CD4-positive, alpha-beta memory T cell (primary cell): ENCODE measurements at regions of chr18 and their contacts with region 1.

Region 1: GRCh38 chr18:24118750-24119577 is 19.9 kb upstream of the CABYR start:
- DNase-seq: peak; percentile 72 to 78 (median 76)
- H3K4me3 ChIP-seq: no peak overlapping the region
- H3K4me3 Mint-ChIP-seq: no peak overlapping the region
- H3K27ac ChIP-seq: no peak overlapping the region
- H3K27ac Mint-ChIP-seq: peak overlapping the region; percentile 37 to 79 (median 50)
- H3K4me1 ChIP-seq: peaks cover 16% of the 10 kb centered on the region
- H3K4me1 Mint-ChIP-seq: peaks cover 16 to 31% (median 23%) of the 10 kb centered on the region in 4 donors
- H3K27me3 ChIP-seq: no peaks in the 10 kb centered on the region
- H3K27me3 Mint-ChIP-seq: no peaks in the 10 kb centered on the region

Region 2: GRCh38 chr18:23619388-23619881 is 499.5 kb before region 1 on chr18:
- CTCF ChIA-PET with region 1: interaction called, 5 read pairs
- POLR2A ChIA-PET with region 1: no interaction called
- intact Hi-C with region 1: loop called (anchors 1 kb)
- DNase-seq: peak in 3 of 5 donors; percentile 5 to 6 (median 5)
- H3K4me3 ChIP-seq: peak overlapping the region in 1 of 2 donors; percentile 3
- H3K4me3 Mint-ChIP-seq: peak overlapping the region; percentile 46 to 81 (median 70)
- H3K27ac ChIP-seq: no peak overlapping the region
- H3K27ac Mint-ChIP-seq: peak overlapping the region in 1 of 7 donors; percentile 1
- H3K4me1 ChIP-seq: peaks cover 11% of the 10 kb centered on the region
- H3K4me1 Mint-ChIP-seq: peaks cover 0 to 7% (median 3%) of the 10 kb centered on the region in 4 donors
- H3K27me3 ChIP-seq: peaks cover 31% of the 10 kb centered on the region
- H3K27me3 Mint-ChIP-seq: peaks cover 34 to 36% of the 10 kb centered on the region in 2 donors

Region 3: DNA sequence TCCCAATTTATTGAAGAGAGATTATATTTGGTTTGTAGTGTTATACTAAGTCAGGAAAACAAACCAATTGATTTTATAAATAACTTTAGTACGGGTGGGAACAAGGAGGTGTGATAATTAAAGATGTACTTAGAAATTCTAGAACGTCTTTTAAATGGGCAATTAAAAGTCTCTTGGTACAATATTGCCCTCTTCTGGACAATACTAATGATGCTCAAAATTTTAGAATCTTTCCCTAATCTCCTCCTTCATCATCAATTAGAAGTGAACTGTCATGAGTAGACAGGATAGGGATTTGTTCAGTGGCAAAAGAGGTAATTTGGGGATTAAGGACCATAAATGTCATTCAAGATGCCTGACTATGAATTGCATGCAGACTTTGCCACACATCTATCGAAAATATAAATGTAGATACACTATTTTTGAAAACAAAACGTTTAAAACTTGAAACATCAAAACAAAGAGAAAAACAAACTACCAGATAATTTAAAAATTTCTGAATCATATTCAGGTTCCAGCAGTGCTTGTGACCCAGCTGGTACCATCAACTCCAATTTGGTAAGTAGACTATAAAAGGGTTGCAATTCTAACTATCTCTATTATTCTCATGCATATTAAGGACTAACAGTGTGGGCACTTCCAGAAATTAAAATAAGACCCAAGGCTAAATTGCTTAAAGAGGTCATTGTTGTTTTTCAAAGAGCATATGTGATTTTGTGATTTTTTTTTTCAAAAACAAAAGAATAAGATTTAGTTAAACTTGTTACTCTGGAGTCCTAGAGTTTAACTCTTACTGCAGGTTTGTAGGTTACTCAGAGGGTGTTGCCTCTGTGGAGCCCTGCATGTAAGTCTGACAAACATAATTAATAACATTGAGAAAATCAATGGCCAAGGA is 306.2 kb before region 1 on chr18:
- CTCF ChIA-PET with region 1: interaction called, 3 read pairs
- POLR2A ChIA-PET with region 1: no interaction called
- intact Hi-C with region 1: loop called (anchors 1 kb)
- DNase-seq: peak in 4 of 5 donors; percentile 28 to 39 (median 32)
- H3K4me3 ChIP-seq: no peak overlapping the region
- H3K4me3 Mint-ChIP-seq: no peak overlapping the region
- H3K27ac ChIP-seq: no peak overlapping the region
- H3K27ac Mint-ChIP-seq: no peak overlapping the region
- H3K4me1 ChIP-seq: peaks cover 13% of the 10 kb centered on the region
- H3K4me1 Mint-ChIP-seq: peaks cover 2 to 16% (median 12%) of the 10 kb centered on the region in 4 donors
- H3K27me3 ChIP-seq: no peaks in the 10 kb centered on the region
- H3K27me3 Mint-ChIP-seq: no peaks in the 10 kb centered on the region

Region 4: DNA sequence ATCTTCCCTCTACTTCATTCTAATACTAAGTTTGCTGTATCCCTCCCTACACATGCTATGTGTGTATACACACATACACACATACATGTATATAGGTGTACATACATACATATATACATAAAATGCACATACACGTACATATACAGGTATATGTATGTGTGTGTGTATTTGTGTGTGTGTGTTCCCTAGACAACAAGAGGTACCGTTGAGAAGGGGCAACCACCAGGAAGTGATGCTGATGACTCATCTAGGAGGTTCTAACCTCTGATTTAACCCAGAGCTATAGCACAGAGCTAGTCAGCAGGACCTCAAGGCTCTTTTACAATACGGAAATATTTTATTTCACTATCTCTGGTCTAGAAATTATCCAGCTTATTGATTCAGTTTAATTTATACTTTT is 290.5 kb before region 1 on chr18:
- CTCF ChIA-PET with region 1: no interaction called
- POLR2A ChIA-PET with region 1: no interaction called
- intact Hi-C with region 1: loop called (anchors 2 kb)
- DNase-seq: peak; percentile 68 to 87 (median 83)
- H3K4me3 ChIP-seq: no peak overlapping the region
- H3K4me3 Mint-ChIP-seq: peak overlapping the region in 1 of 8 donors; percentile 57
- H3K27ac ChIP-seq: peak overlapping the region; percentile 48
- H3K27ac Mint-ChIP-seq: peak overlapping the region in 6 of 7 donors; percentile 80 to 96 (median 92)
- H3K4me1 ChIP-seq: peaks cover 15% of the 10 kb centered on the region
- H3K4me1 Mint-ChIP-seq: peaks cover 15 to 36% (median 19%) of the 10 kb centered on the region in 4 donors
- H3K27me3 ChIP-seq: no peaks in the 10 kb centered on the region
- H3K27me3 Mint-ChIP-seq: no peaks in the 10 kb centered on the region

Region 5: DNA sequence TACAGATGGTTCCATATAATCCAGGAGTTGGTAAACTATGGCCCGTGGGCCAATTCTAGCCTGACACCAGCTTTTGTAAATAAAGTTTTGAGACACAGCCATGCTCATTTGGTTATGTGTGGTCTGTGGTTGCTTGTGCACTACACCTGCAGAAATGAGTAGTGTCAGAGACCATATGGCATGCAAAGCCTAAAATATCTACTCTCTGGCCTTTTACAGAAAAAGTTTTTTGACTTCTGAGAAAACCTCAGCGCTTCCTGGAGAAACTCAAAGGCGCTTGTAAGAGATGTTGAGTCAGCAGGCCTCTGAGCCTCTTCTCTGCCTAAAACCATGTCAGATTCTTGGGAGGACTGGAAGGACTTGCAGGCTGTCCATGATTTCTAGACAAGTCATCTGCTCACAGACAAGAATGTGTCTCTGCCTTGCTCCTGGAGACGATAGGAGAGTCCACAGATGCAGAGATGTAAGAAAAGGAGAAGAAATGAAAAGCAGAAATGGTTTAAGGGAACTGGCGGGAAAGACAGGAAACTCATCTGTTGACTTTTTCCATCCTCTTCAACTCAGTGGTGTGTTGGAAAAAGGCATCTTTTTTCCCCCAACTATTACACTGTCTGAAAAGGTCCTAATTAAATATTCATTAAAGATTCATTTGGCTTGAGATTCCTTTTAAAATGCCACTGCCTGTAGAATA is 99.2 kb before region 1 on chr18:
- CTCF ChIA-PET with region 1: interaction called, 3 read pairs
- POLR2A ChIA-PET with region 1: no interaction called
- intact Hi-C with region 1: loop called (anchors 1 kb)
- DNase-seq: peak; percentile 73 to 82 (median 79)
- H3K4me3 ChIP-seq: peak overlapping the region in 1 of 2 donors; percentile 50
- H3K4me3 Mint-ChIP-seq: peak overlapping the region; percentile 78 to 100 (median 96)
- H3K27ac ChIP-seq: peak overlapping the region; percentile 75
- H3K27ac Mint-ChIP-seq: peak overlapping the region; percentile 85 to 99 (median 95)
- H3K4me1 ChIP-seq: peaks cover 83% of the 10 kb centered on the region
- H3K4me1 Mint-ChIP-seq: peaks cover 68 to 96% (median 79%) of the 10 kb centered on the region in 4 donors
- H3K27me3 ChIP-seq: no peaks in the 10 kb centered on the region
- H3K27me3 Mint-ChIP-seq: no peaks in the 10 kb centered on the region

Region 6: GRCh38 chr18:24075731-24076130 is 43.2 kb before region 1 on chr18:
- CTCF ChIA-PET with region 1: interaction called, 3 read pairs
- POLR2A ChIA-PET with region 1: no interaction called
- intact Hi-C with region 1: loop called (anchors 2 kb)
- DNase-seq: no peak
- H3K4me3 ChIP-seq: no peak overlapping the region
- H3K4me3 Mint-ChIP-seq: peak overlapping the region in 5 of 8 donors; percentile 48 to 70 (median 64)
- H3K27ac ChIP-seq: no peak overlapping the region
- H3K27ac Mint-ChIP-seq: peak overlapping the region; percentile 79 to 97 (median 87)
- H3K4me1 ChIP-seq: peaks cover 22% of the 10 kb centered on the region
- H3K4me1 Mint-ChIP-seq: peaks cover 38 to 78% (median 57%) of the 10 kb centered on the region in 4 donors
- H3K27me3 ChIP-seq: no peaks in the 10 kb centered on the region
- H3K27me3 Mint-ChIP-seq: no peaks in the 10 kb centered on the region

Region 7: DNA sequence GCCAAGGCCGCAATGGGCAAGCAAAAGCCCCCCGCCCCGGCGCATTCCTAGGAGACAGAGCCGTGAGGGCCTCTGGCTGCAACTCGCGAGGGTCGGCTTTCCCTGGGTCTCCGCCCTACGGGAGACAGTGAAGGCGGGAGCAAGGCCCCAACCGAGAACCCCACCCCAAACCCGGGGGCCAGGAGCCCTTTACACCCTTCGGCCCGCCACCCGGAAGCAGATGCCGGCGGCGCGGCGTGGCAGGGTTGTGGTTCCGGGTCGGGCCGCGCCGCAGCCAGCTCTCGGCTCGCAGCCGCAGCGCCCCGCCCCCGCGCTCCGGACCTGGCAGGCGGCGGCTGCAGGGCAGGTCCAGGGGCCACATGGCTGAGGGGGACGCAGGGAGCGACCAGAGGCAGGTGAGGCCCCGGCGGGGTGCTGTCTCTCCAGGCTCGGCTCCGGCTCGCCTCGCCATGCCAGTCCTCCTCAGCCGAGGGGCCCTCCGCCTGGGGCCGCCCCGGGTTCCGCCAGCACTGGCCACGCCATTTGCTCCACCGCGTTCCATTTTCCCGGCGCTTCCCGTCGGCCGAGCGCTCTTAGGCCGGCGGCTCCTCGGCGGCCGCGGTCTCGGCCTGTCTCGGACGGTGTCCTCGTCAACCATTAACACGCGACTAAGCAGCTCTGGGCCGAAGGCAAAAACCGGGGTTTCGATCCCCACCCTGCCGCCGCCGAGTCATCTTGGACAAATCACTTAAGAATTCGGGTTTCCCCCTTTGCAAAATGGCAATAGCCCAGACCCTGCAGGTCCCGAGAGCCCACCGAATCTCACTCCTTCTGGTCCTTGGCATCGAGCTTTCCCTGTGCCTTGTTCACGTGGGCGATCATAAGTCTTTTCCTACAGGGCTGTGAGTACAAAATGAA is 307.7 kb after region 1 on chr18 and contains the start of gene IMPACT:
- CTCF ChIA-PET with region 1: no interaction called
- POLR2A ChIA-PET with region 1: no interaction called
- intact Hi-C with region 1: no loop called
- DNase-seq: peak; percentile 52 to 83 (median 78)
- H3K4me3 ChIP-seq: peak within 1 kb of the TSS; percentile 7 to 64
- H3K4me3 Mint-ChIP-seq: peak within 1 kb of the TSS; percentile 85 to 95 (median 88)
- H3K27ac ChIP-seq: peak within 1 kb of the TSS; percentile 44
- H3K27ac Mint-ChIP-seq: peak within 1 kb of the TSS; percentile 45 to 94 (median 81)
- H3K4me1 ChIP-seq: peaks cover 17% of the 10 kb centered on the region
- H3K4me1 Mint-ChIP-seq: peaks cover 16 to 30% (median 18%) of the 10 kb centered on the region in 4 donors
- H3K27me3 ChIP-seq: peaks cover 1% of the 10 kb centered on the region
- H3K27me3 Mint-ChIP-seq: peaks cover 14 to 25% of the 10 kb centered on the region in 2 donors
- total RNA-seq, gene IMPACT: 12.5 to 14.5 TPM

Region 8: DNA sequence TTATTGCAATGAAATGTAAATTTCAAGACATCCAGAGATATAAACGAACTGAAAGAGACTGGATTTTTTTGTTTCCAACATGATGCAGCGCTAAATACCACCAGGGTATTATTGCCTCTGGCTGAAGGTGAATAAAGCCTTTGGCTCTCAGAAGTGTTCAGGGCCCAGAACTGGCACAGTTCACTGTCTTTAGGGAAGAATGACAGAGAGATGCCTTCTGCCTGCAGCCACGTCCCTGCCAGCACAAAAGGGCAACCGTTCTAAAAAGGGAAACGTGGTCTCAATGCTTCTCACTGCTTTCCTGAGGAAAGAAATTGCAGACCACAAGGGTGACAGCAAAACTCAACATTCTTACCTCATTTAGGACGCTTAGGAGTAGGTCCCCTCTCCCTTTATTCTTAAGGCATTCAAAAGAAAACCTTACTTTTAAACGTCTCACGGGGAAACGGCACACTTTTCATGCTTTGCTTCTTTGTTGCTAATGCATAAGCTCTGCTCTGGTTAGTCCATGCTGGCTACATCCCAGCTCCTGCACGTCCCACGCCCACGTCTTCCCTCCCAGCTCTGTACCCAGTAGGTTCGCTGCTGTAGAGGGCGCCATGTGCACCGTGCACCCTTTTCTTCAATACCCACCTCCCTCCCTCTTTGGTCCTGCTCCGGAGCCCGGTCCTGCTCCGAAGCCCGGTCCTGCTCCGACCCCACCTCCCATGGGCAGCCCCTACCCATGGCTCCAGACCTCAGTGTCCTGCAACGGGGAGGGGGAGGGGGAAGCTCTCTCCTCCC is 512.5 kb after region 1 on chr18:
- CTCF ChIA-PET with region 1: no interaction called
- POLR2A ChIA-PET with region 1: no interaction called
- intact Hi-C with region 1: no loop called
- DNase-seq: no peak
- H3K4me3 ChIP-seq: no peak overlapping the region
- H3K4me3 Mint-ChIP-seq: no peak overlapping the region
- H3K27ac ChIP-seq: no peak overlapping the region
- H3K27ac Mint-ChIP-seq: no peak overlapping the region
- H3K4me1 ChIP-seq: no peaks in the 10 kb centered on the region
- H3K4me1 Mint-ChIP-seq: no peaks in the 10 kb centered on the region
- H3K27me3 ChIP-seq: no peaks in the 10 kb centered on the region
- H3K27me3 Mint-ChIP-seq: peaks cover 6 to 7% of the 10 kb centered on the region in 2 donors